Ovary (tissue), 10 donors: ENCODE measurements at regions of chr12 and their contacts with region 1.

Region 1: GRCh38 chr12:50986966-50987737 is 34.8 kb downstream of the HIGD1C start:
- DNase-seq: peak in 3 of 5 donors; percentile 30 to 63 (median 32)
- H3K4me3 ChIP-seq: no peak overlapping the region
- H3K27ac ChIP-seq: no peak overlapping the region
- H3K4me1 ChIP-seq: no peaks in the 10 kb centered on the region
- H3K27me3 ChIP-seq: no peaks in the 10 kb centered on the region
- CTCF ChIP-seq: peak in 2 of 3 donors; percentile 44 to 52
- EP300 ChIP-seq: no peak
- POLR2A ChIP-seq: no peak

Region 2: GRCh38 chr12:50763639-50764285 is 223.4 kb before region 1 on chr12 and contains the start of gene ATF1:
- intact Hi-C with region 1: loop called in 1 of 4 experiments (anchors 10 kb)
- DNase-seq: peak; percentile 83 to 92 (median 88)
- H3K4me3 ChIP-seq: peak within 1 kb of the TSS; percentile 89
- H3K27ac ChIP-seq: peak within 1 kb of the TSS; percentile 89 to 91
- H3K4me1 ChIP-seq: peaks cover 8% of the 10 kb centered on the region
- H3K27me3 ChIP-seq: no peaks in the 10 kb centered on the region
- CTCF ChIP-seq: no peak
- EP300 ChIP-seq: no peak
- POLR2A ChIP-seq: peak; percentile 81
- total RNA-seq, gene ATF1: 22.3 to 55.6 (median 44.4) TPM

Region 3: GRCh38 chr12:50924439-50925341 is 62.5 kb before region 1 on chr12:
- intact Hi-C with region 1: loop called in 2 of 4 experiments (anchors 10 kb)
- DNase-seq: peak; percentile 85 to 95 (median 91)
- H3K4me3 ChIP-seq: peak overlapping the region; percentile 69
- H3K27ac ChIP-seq: peak overlapping the region; percentile 35 to 87
- H3K4me1 ChIP-seq: peaks cover 9% of the 10 kb centered on the region
- H3K27me3 ChIP-seq: no peaks in the 10 kb centered on the region
- CTCF ChIP-seq: no peak
- EP300 ChIP-seq: no peak
- POLR2A ChIP-seq: no peak

Region 4: DNA sequence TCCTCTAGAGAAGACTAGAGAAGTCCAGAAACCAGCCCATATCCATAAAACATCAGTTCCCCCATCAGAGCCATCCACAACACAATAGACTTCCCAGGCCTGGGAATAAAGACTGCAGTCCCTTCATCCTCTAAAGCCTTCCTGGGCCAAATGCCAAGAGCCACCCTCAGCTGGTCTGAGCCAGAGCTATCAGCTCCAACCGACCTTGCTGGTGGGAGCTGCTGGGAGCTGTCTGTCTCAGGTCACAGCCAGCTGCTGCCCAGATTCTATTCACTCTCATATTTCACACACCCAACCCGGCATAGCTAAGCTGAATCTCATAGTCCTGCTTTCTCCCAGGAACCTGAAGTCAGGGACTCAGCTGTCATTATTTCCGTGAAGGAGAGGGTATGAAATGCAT is 196.7 kb after region 1 on chr12:
- intact Hi-C with region 1: no loop called
- DNase-seq: no peak
- H3K4me3 ChIP-seq: no peak overlapping the region
- H3K27ac ChIP-seq: no peak overlapping the region
- H3K4me1 ChIP-seq: no peaks in the 10 kb centered on the region
- H3K27me3 ChIP-seq: no peaks in the 10 kb centered on the region
- CTCF ChIP-seq: no peak
- EP300 ChIP-seq: no peak
- POLR2A ChIP-seq: no peak